Calu3 (cell line): ENCODE measurements at regions of chr3 and their contacts with region 1.

Region 1: DNA sequence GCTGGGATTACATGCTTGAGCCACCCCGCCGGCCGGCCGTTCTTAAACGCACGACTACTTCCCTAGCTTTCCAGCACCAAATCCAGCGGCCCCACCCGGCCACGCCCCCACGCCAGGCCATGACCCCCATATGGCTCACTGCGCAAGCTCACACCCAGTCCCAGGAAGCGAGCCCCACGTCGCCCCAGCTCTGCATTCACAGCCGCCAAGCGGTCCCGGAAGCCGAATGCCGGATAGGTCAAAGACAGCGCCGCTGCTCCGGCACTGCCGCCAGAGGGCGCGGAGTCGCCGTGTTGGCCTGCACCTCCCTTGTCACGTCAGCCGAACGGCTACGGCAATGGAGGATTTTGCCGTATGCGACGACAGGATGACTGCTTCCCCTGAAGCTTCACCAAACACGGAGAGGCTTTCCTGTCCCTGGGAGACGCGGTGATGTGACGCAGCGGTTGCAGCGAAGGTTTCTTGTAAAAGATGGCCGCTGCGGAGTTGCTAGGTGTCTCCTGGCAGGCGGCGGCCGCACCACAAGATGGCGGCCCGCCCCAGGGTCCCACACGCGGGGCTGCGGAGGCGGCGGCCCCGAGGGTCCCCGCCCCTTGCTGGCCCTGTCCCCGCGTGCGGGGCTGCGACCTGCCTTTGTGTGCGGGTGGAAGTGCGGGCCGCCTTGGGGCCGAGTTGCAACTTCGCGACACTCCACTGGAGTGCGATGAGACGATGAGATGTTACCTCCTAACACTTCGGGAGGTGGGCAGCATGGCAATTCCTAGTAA is 30.2 kb upstream of the RPN1 start:
- DNase-seq: peak; percentile 100
- H3K4me3 Mint-ChIP-seq: peak overlapping the region; percentile 81
- H3K27ac Mint-ChIP-seq: peak overlapping the region; percentile 96
- H3K4me1 Mint-ChIP-seq: peaks cover 10% of the 10 kb centered on the region
- H3K27me3 Mint-ChIP-seq: no peaks in the 10 kb centered on the region
- CTCF ChIP-seq: peak; percentile 99

Region 2: GRCh38 chr3:128170805-128171516 is 509.8 kb before region 1 on chr3:
- CTCF ChIA-PET with region 1: no interaction called
- intact Hi-C with region 1: no loop called
- DNase-seq: peak; percentile 72
- H3K4me3 Mint-ChIP-seq: no peak overlapping the region
- H3K27ac Mint-ChIP-seq: no peak overlapping the region
- H3K4me1 Mint-ChIP-seq: no peaks in the 10 kb centered on the region
- H3K27me3 Mint-ChIP-seq: no peaks in the 10 kb centered on the region
- CTCF ChIP-seq: peak; percentile 41

Region 3: GRCh38 chr3:128650096-128651050 is 30.4 kb before region 1 on chr3 and contains the start of gene RPN1:
- CTCF ChIA-PET with region 1: interaction called, 20 read pairs
- intact Hi-C with region 1: no loop called
- DNase-seq: peak; percentile 99
- H3K4me3 Mint-ChIP-seq: peak within 1 kb of the TSS; percentile 99
- H3K27ac Mint-ChIP-seq: peak within 1 kb of the TSS; percentile 98
- H3K4me1 Mint-ChIP-seq: peaks cover 10% of the 10 kb centered on the region
- H3K27me3 Mint-ChIP-seq: no peaks in the 10 kb centered on the region
- CTCF ChIP-seq: no peak
- total RNA-seq, gene RPN1: 449 and 474 TPM in 2 replicates

Region 4: DNA sequence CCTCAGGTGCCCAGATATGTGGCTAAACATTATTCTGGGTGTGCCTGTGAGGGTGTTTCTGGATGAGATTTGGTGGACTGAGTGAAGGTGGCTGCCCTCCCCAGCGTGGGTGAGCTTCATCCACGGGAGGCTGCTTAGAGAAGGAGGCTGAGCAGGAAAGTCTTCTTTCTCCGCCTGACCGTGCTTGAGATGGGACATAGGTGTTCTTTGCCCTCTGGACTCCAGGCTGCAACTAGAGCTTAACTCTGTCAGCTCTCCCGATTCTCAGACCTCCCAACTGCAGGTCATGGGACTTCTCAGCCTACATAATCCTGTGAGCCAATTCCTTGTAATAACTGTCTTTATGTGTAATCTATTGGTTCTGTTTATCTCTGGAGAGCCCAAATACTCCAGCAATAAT is 79.3 kb after region 1 on chr3:
- CTCF ChIA-PET with region 1: interaction called, 11 read pairs
- intact Hi-C with region 1: no loop called
- DNase-seq: no peak
- H3K4me3 Mint-ChIP-seq: no peak overlapping the region
- H3K27ac Mint-ChIP-seq: no peak overlapping the region
- H3K4me1 Mint-ChIP-seq: peaks cover 18% of the 10 kb centered on the region
- H3K27me3 Mint-ChIP-seq: no peaks in the 10 kb centered on the region
- CTCF ChIP-seq: no peak

Region 5: DNA sequence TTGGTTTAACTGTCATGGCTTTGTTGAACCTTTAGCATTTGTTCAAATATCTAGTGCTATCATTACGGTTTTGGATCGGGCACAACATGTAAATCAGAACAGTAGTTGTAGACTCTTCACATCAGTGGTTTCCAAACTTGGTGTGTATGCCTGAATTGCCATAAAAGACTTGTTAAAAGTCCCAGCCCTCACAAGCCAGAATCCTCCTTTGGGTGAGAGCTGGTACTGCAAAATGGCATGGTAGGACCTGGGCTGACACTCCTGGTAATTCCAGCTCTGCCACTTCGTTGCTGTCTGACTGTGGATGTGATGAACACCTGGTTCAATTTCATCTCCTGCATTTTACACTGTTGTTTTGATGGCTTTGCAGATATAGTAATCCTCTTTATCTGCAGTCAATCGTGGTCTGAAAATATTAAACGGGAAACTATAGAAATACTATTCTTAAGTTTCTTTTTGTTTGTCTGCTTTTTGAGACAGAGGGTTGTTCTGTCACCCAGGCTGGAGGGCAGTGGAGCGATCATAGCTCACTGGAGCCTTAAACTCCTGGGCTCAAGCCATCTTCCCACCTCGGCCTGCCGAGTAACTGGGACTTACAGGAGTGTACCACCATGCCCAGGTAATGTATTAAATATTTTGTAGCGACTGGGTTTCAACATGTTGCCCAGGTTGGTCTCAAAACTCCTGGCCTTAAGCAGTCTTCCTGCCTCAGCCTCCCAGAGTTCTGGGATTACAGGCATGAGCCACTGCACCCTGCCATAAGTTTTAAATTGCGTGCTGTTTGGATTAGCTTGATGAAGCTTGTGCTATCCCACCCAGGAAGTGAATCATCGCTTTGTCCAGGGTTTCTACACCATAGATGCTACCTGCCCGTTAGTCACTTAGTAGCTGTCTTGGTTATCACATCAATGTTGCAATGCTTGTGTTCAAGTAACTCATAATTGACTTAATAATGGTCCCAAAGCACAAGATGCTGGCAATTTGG is 106.8 kb after region 1 on chr3:
- CTCF ChIA-PET with region 1: interaction called, 31 read pairs
- intact Hi-C with region 1: no loop called
- DNase-seq: peak; percentile 79
- H3K4me3 Mint-ChIP-seq: no peak overlapping the region
- H3K27ac Mint-ChIP-seq: no peak overlapping the region
- H3K4me1 Mint-ChIP-seq: peaks cover 55% of the 10 kb centered on the region
- H3K27me3 Mint-ChIP-seq: no peaks in the 10 kb centered on the region
- CTCF ChIP-seq: peak; percentile 87

Region 6: GRCh38 chr3:128845778-128846485 is 165.1 kb after region 1 on chr3:
- CTCF ChIA-PET with region 1: interaction called, 14 read pairs
- intact Hi-C with region 1: loop called (anchors 2 kb)
- DNase-seq: peak; percentile 96
- H3K4me3 Mint-ChIP-seq: peak overlapping the region; percentile 64
- H3K27ac Mint-ChIP-seq: no peak overlapping the region
- H3K4me1 Mint-ChIP-seq: peaks cover 15% of the 10 kb centered on the region
- H3K27me3 Mint-ChIP-seq: peaks cover 35% of the 10 kb centered on the region
- CTCF ChIP-seq: peak; percentile 84